ENCODE measurements at regions of chr12 and their contacts with region 1.

Region 1: DNA sequence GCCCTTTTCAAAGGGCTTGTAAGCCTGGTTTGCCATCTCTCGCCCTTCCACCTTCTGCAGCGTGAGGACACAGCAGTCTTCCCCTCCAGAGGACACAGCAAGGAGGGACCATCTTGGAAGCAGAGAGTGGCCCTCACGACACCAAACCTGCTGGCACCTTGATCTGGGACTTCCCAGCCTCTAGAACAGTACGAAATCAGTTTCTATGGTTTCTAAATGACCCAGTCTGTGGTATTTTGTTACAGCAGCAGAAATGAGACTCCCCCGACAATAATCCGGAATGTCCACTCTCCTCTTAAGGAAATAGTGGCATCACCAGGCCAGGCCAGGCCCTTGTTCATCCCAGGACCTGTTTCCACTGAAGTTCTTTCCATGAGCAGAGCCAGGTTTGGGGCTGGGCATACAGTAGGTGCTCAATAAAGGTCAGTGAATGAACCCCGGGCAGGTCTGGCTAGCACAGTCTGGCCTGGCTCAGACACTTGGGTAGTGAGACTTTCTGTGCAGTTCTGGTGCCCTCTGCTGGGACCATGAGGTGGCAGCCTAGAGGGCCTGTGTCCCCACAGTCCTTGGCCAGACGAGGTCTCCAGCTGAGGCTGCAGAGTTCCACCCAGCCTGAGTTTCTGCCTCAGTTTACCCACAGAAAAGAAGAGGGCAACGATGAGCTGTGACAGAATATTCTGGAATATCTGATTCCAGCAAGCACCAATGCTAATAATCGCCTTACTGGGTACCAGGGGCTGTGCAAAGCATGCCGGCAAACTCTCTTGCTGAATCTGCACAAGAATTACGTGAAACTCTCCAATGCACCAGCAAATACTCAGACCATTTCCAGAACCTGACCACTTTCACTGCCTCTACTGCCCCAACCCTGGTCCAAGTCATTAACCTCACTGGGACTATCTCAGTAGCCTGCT is 14.0 kb downstream of the ABCB9 start:
- DNase-seq: peak; percentile 45 to 62
- ATAC-seq: peak; percentile 92 to 94
- H3K4me3 ChIP-seq: no peak overlapping the region
- H3K27ac ChIP-seq: no peak overlapping the region
- H3K4me1 ChIP-seq: peaks cover 2 to 7% of the 10 kb centered on the region in 2 donors
- H3K27me3 ChIP-seq: no peaks in the 10 kb centered on the region
- CTCF ChIP-seq: peak; percentile 80 to 90 (median 89)
- POLR2A ChIP-seq: no peak

Region 2: DNA sequence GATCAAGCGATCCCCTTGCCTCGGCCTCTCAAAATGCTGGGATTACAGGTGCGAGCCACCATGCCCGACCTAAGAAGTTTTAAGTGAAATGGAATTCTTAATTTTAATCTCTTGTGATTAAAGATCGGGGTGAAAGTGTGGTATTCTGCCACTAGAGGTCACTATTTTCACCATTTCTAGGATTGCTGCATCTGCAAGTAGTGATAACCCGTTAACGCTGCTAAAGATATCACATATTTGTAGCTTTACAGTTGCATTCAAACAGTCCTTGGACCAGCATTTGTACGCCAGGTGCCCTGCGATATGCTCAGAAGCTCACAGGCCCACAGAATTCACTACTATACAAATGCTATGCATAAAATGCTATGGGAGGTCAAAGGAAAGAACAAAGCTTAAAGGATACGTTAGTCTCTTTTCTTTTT is 158.5 kb before region 1 on chr12:
- in situ Hi-C with region 1: loop called in 2 of 4 experiments (anchors 5 to 10 kb)
- intact Hi-C with region 1: no loop called
- DNase-seq: no peak
- ATAC-seq: peak; percentile 62 to 69
- H3K4me3 ChIP-seq: no peak overlapping the region
- H3K27ac ChIP-seq: no peak overlapping the region
- H3K4me1 ChIP-seq: no peaks in the 10 kb centered on the region
- H3K27me3 ChIP-seq: no peaks in the 10 kb centered on the region
- CTCF ChIP-seq: peak; percentile 37 to 76 (median 56)
- POLR2A ChIP-seq: no peak

Region 3: GRCh38 chr12:122851820-122852219 is 100.4 kb before region 1 on chr12:
- in situ Hi-C with region 1: loop called in 3 of 4 experiments (anchors 5 to 10 kb)
- intact Hi-C with region 1: no loop called
- DNase-seq: no peak
- ATAC-seq: peak; percentile 58 to 82
- H3K4me3 ChIP-seq: no peak overlapping the region
- H3K27ac ChIP-seq: peak overlapping the region; percentile 55 to 77 (median 66)
- H3K4me1 ChIP-seq: peaks cover 0 to 11% of the 10 kb centered on the region in 2 donors
- H3K27me3 ChIP-seq: no peaks in the 10 kb centered on the region
- CTCF ChIP-seq: no peak
- POLR2A ChIP-seq: no peak

Region 4: GRCh38 chr12:122860346-122861090 is 91.7 kb before region 1 on chr12:
- in situ Hi-C with region 1: loop called (anchors 5 to 10 kb)
- intact Hi-C with region 1: loop called (anchors 1 kb)
- DNase-seq: peak; percentile 64 to 77
- ATAC-seq: peak; percentile 80 to 91
- H3K4me3 ChIP-seq: no peak overlapping the region
- H3K27ac ChIP-seq: peak overlapping the region in 3 of 4 donors; percentile 33 to 68 (median 54)
- H3K4me1 ChIP-seq: peaks cover under 1 to 6% of the 10 kb centered on the region in 2 donors
- H3K27me3 ChIP-seq: no peaks in the 10 kb centered on the region
- CTCF ChIP-seq: peak; percentile 94 to 98 (median 96)
- POLR2A ChIP-seq: no peak